Caco-2 (cell line): ENCODE measurements at regions of chr16 and their contacts with region 1.

Region 1: DNA sequence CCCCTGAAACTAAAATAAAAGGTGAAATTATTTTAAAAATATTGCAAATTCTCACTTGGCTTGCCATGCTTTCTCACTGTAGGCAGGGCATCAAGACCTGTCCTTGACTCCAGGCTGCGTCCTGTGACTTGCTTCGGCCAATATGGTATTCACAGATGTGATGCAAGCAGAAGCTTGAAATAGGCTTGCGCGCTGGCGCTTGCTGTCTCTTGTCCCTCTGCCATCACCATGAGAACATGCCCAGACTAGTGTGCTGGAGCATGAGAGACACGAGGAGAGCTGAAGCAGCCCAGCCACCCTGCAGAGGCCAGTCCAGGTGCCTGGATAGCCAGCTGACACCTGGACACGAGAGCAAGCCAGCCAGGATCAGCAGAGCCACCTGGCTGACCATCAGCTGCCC is 21.8 kb upstream of the ZKSCAN2 start:
- DNase-seq: no peak
- H3K4me3 ChIP-seq: no peak overlapping the region
- H3K4me3 Mint-ChIP-seq: no peak overlapping the region
- H3K27ac Mint-ChIP-seq: no peak overlapping the region
- H3K4me1 ChIP-seq: no peaks in the 10 kb centered on the region
- H3K4me1 Mint-ChIP-seq: no peaks in the 10 kb centered on the region
- H3K27me3 ChIP-seq: no peaks in the 10 kb centered on the region
- H3K27me3 Mint-ChIP-seq: no peaks in the 10 kb centered on the region
- CTCF ChIP-seq: no peak

Region 2: DNA sequence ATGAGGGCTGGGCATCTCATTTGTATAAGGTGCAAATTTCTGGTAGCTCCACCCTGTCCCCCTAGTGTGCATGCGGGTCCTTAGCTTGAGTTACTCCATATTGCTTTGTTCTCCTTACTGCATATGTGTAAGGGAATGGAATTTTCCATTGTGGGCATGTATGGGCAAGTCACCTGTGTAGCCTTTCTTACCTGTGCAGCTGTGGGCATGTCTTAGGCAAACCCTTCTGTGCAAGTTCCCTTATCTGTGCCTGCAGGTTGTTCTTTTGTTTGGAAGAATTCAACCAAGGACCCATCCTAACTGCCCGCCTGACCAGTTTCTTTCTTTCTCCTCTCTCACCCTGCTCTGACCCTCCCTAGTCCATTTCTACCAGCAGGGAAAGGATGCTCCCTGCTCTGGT is 289.5 kb after region 1 on chr16:
- CTCF ChIA-PET with region 1: no interaction called
- POLR2A ChIA-PET with region 1: no interaction called
- intact Hi-C with region 1: loop called (anchors 1 kb)
- DNase-seq: no peak
- H3K4me3 ChIP-seq: no peak overlapping the region
- H3K4me3 Mint-ChIP-seq: no peak overlapping the region
- H3K27ac Mint-ChIP-seq: no peak overlapping the region
- H3K4me1 ChIP-seq: no peaks in the 10 kb centered on the region
- H3K4me1 Mint-ChIP-seq: no peaks in the 10 kb centered on the region
- H3K27me3 ChIP-seq: no peaks in the 10 kb centered on the region
- H3K27me3 Mint-ChIP-seq: peaks cover 3% of the 10 kb centered on the region
- CTCF ChIP-seq: no peak

Region 3: DNA sequence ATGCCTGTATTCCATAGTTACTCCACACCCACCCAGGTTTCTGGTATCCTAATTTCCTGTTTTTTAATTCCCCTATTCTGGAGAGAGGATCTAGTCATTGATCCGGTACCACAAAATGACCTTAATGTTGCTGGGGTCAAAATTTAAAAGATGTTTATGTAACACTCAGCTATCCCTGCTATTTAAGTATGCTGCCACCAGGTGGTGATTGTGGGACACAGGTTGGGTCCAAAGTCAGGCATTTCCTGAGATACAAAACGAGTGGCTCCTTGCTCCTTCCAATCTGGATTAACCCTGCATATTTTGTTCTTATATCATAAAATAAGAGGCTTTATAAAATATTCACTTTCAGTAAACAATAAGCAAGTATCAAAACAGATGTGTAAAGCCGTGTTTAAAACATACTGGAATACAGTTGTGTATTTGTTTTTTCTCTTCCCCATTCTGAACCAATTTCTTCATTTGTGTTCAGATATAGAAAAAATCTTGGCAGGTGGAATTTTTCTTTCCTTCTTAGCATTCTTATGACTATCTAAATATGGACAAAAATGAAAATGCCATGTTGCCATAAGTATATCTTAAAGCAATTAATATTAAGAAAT is 428.6 kb after region 1 on chr16:
- CTCF ChIA-PET with region 1: interaction called, 5 read pairs
- POLR2A ChIA-PET with region 1: no interaction called
- intact Hi-C with region 1: loop called (anchors 1 kb)
- DNase-seq: peak in 1 of 2 experiments; percentile 32
- H3K4me3 ChIP-seq: no peak overlapping the region
- H3K4me3 Mint-ChIP-seq: no peak overlapping the region
- H3K27ac Mint-ChIP-seq: no peak overlapping the region
- H3K4me1 ChIP-seq: no peaks in the 10 kb centered on the region
- H3K4me1 Mint-ChIP-seq: no peaks in the 10 kb centered on the region
- H3K27me3 ChIP-seq: no peaks in the 10 kb centered on the region
- H3K27me3 Mint-ChIP-seq: peaks cover 3% of the 10 kb centered on the region
- CTCF ChIP-seq: peak in 1 of 2 experiments; percentile 38